IMR-90 (cell line): ENCODE measurements at regions of chr17 and their contacts with region 1.

Region 1: DNA sequence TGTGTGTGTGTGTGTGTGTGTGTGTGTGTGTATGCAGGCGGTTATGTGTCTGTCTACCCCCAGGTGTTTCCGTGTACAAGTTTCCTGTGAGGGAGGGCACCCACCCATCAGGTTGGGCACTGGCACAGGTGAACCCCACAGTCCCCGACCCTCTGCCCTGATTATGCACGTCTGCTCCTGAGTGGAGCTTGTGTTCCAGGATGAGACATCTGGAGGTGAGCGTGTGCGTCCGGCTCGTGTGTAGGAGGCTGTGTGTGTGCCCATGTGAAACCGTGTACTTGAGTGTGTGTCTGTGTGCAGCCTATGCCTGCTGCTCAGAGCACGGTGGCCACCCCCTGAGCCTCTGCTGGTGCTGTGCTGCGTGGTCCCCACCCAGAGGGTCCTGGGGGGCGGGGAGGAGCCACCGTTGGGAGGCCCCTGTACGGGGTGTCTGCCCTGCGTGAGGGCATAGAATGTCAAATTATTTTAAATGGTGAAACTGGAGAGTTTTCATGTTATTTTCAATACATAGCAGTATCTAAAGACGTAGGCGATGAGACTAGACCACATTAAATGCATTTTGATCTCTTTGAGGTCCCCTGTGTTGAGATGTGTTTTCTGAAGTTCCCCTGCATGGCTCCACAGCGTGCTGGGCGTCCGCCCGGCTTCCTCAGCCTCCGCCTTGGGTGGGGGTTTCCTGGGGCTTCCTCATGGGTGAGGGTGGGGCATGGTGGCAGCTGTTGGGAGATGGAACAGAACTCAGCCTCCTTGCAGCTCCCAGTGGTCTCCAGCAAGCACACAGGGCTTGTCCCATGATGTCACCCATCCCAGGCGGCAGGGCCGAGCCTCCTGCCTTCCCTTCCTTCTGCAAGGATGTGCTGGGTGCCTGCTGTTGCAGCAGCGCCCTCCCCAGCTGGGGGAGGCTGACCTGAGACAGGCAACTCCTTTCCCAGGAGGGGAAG is 43.4 kb downstream of the KCNJ12 start:
- DNase-seq: no peak
- ATAC-seq: no peak
- H3K4me3 ChIP-seq: no peak overlapping the region
- H3K27ac ChIP-seq: no peak overlapping the region
- H3K4me1 ChIP-seq: peaks cover 2% of the 10 kb centered on the region
- H3K27me3 ChIP-seq: peaks cover 2% of the 10 kb centered on the region; the same call in 1 of the 2 replicates
- CTCF ChIP-seq: no peak
- POLR2A ChIP-seq: no peak
- RAD21 ChIP-seq: no peak

Region 2: GRCh38 chr17:21705021-21705601 is 285.5 kb after region 1 on chr17:
- CTCF ChIA-PET with region 1: no interaction called
- POLR2A ChIA-PET with region 1: no interaction called
- dilution Hi-C with region 1: no loop called
- in situ Hi-C with region 1: loop called (anchors 10 kb)
- intact Hi-C with region 1: no loop called
- DNase-seq: no peak
- ATAC-seq: no peak
- H3K4me3 ChIP-seq: no peak overlapping the region
- H3K27ac ChIP-seq: no peak overlapping the region
- H3K4me1 ChIP-seq: no peaks in the 10 kb centered on the region
- H3K27me3 ChIP-seq: no peaks in the 10 kb centered on the region
- CTCF ChIP-seq: no peak
- POLR2A ChIP-seq: no peak
- RAD21 ChIP-seq: no peak